ENCODE measurements at regions of chr4 and their contacts with region 1.

Region 1: DNA sequence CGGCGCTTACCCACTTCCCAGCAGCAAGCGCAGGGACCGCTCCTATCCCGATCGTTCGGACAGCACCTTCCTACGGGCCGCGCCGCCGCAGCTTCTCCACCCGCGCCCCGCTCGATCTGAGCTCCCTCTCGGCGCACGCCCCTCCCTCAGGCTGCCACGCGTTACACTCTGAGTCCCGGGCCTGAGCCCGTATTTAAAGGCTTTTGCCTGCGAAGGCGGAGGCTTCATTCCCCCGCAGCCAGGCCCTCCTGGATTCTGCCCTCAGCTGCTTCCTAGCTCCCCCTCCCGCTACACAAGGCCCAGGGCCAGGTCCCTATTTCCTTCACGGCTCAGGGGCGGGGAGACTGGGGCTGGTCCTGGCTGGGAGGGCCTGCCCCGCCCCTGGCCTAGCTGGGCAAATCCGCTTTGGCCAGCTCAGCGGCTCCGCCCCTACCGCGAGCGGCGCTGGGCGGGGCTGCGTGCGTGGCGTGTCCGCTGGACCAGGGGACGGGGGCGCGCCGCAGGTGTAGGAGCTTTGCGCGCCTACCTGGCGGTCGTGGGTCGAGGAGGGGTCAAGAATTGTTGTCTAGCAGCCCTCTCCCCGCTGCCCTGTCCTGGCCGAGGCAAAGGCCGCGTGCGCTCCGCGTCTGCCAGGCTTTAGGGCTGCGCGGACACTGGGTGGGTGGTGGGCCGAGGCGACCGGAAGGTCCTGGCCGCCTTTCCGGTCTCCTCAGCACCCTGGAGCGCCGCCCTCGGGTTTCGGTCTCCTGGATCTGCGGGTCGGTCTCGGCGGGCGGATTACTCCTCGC is at the start of gene UGDH:
- DNase-seq: peak; percentile 91 to 100 (median 97)

Region 2: DNA sequence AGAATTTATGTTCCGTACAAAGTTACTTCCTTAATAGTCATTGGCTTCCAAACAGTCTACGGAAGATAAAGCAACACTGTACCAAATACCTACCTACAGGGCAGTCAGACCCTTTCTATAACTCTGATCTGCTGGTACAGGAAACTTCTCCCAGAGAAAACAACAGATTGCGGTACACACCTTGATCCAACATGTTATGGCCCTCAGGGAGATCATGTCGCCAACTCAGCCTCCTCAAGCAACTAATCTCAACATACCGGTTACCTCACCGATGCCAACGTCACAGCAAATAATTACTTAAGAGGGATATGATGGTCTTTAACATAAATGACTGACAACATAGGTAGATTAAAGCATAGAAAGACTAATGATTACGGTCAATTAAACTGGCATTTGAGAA is 231.7 kb before region 1 on chr4:
- intact Hi-C with region 1: no loop called
- DNase-seq: no peak

Region 3: GRCh38 chr4:39469429-39470077 is 57.9 kb before region 1 on chr4:
- intact Hi-C with region 1: loop called (anchors 5 kb)
- DNase-seq: peak in 1 of 10 donors; percentile 16

Region 4: GRCh38 chr4:39697740-39698423 is 170.4 kb after region 1 on chr4 and contains the start of gene UBE2K:
- intact Hi-C with region 1: loop called (anchors 2 kb)
- DNase-seq: peak; percentile 71 to 97 (median 80)

Measured in posterior cingulate gyrus (tissue), 11 donors.